B cell (primary cell): ENCODE measurements at regions of chr18 and their contacts with region 1.

Region 1: DNA sequence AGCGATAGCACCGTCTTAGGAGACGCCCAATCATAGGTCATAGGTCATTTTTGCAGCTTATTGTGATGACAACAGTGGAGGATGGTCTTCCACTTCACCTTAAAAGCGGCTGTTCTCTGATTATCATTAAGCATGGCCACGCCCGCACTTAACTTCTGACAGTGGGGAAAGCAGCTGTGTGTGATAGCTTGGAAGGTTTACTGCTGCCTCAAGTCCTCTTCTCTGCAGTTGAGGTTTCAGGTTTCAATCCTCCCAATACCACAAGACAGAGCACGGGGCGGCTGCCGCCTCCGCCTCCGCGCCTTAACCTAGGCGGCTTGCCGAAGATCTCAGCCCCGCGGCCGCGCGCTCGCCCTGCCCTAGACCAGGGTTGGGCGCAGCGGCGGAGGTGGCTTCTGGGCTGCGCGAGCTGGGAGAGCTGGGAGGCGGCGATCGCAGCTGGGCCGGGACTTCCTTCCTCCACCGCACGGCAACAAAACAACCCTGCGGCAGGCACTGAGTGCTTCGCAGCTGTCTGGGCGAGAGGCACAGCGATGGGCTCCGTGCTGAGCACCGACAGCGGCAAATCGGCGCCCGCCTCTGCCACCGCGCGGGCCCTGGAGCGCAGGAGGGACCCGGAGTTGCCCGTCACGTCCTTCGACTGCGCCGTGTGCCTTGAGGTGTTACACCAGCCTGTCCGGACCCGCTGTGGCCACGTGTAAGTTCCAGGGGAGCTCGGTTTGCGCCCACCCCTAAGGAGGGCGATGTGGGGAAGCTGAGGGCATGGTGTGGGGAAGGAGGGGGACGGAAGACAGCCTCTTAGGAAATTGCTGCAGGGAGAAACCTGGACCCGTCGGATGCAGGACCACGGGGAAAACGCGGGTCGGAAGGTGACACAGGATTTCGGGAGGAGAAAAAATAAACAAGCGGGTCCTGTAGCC is at the start of gene RNF125:
- DNase-seq: peak; percentile 89
- ATAC-seq: peak; percentile 82
- H3K4me3 ChIP-seq: peak within 1 kb of the TSS; percentile 82 to 93 (median 89)
- H3K4me3 Mint-ChIP-seq: peak within 1 kb of the TSS; percentile 100
- H3K27ac ChIP-seq: peak within 1 kb of the TSS; percentile 58 to 80
- H3K27ac Mint-ChIP-seq: peak within 1 kb of the TSS; percentile 97
- H3K4me1 ChIP-seq: peaks cover 14 to 20% of the 10 kb centered on the region in 2 donors
- H3K4me1 Mint-ChIP-seq: peaks cover 33% of the 10 kb centered on the region
- H3K27me3 ChIP-seq: no peaks in the 10 kb centered on the region
- H3K27me3 Mint-ChIP-seq: no peaks in the 10 kb centered on the region
- CTCF ChIP-seq: no peak
- total RNA-seq, gene RNF125: 5.6 and 6.4 TPM in 2 replicates

Region 2: DNA sequence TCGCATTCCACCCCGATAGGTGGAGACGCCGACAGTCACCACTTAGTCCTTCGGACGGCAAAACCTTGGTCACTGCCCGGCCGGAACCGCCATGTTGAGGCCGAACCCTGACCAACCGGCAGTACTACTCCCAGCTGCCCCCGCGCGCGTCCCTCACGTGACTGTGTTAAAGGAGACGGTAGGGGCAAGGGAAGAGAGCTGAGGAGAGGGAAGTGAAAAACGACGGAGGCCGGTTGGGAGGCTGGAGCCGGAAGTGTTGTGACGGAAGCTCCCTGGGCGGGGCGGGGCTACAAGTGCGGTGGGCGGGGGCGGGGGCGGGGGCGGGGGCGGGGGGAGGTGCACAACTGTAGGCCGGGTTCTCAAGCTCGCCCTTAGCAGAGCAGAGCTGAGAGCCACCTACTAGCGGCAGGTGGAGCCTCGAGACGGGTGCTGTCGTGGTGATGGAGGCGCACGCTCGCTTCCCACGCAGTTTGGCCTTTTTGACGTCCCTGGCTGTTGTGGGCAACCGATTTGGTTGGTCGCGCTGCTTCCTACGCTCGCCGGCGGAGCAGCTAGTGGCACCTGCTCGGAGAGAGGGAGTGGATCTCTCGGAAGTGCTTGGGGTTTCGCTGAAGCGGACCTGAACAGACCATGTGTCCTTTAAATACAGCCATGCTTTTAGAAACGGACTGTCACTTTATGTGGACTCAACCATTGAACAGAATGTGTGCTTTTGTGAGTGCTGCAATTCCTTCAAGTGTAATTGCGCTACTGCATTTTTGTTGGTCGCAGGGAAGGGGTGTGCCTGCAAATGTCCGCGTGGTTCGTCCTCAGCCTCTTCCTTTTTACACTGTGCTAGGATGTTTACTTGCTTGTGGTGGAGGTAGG is 75.4 kb before region 1 on chr18 and contains the start of gene TRAPPC8:
- CTCF ChIA-PET with region 1: interaction called, 5 read pairs
- POLR2A ChIA-PET with region 1: interaction called, 29 read pairs
- intact Hi-C with region 1: loop called (anchors 1 kb)
- DNase-seq: peak; percentile 98
- ATAC-seq: peak; percentile 80
- H3K4me3 ChIP-seq: peak within 1 kb of the TSS; percentile 83 to 97 (median 94)
- H3K4me3 Mint-ChIP-seq: peak within 1 kb of the TSS; percentile 100
- H3K27ac ChIP-seq: peak within 1 kb of the TSS; percentile 98
- H3K27ac Mint-ChIP-seq: peak within 1 kb of the TSS; percentile 100
- H3K4me1 ChIP-seq: peaks cover 24 to 31% of the 10 kb centered on the region in 2 donors
- H3K4me1 Mint-ChIP-seq: peaks cover 39% of the 10 kb centered on the region
- H3K27me3 ChIP-seq: no peaks in the 10 kb centered on the region
- H3K27me3 Mint-ChIP-seq: no peaks in the 10 kb centered on the region
- CTCF ChIP-seq: no peak
- total RNA-seq, gene TRAPPC8: 89.8 and 95.5 TPM in 2 replicates

Region 3: GRCh38 chr18:32042337-32042736 is 23.7 kb after region 1 on chr18:
- CTCF ChIA-PET with region 1: interaction called, 3 read pairs
- POLR2A ChIA-PET with region 1: interaction called, 7 read pairs
- intact Hi-C with region 1: loop called (anchors 1 kb)
- DNase-seq: peak; percentile 55
- ATAC-seq: peak; percentile 45
- H3K4me3 ChIP-seq: no peak overlapping the region
- H3K4me3 Mint-ChIP-seq: peak overlapping the region; percentile 73
- H3K27ac ChIP-seq: peak overlapping the region; percentile 46 to 68
- H3K27ac Mint-ChIP-seq: peak overlapping the region; percentile 89
- H3K4me1 ChIP-seq: peaks cover 24 to 30% of the 10 kb centered on the region in 2 donors
- H3K4me1 Mint-ChIP-seq: peaks cover 31% of the 10 kb centered on the region
- H3K27me3 ChIP-seq: no peaks in the 10 kb centered on the region
- H3K27me3 Mint-ChIP-seq: no peaks in the 10 kb centered on the region
- CTCF ChIP-seq: no peak

Region 4: DNA sequence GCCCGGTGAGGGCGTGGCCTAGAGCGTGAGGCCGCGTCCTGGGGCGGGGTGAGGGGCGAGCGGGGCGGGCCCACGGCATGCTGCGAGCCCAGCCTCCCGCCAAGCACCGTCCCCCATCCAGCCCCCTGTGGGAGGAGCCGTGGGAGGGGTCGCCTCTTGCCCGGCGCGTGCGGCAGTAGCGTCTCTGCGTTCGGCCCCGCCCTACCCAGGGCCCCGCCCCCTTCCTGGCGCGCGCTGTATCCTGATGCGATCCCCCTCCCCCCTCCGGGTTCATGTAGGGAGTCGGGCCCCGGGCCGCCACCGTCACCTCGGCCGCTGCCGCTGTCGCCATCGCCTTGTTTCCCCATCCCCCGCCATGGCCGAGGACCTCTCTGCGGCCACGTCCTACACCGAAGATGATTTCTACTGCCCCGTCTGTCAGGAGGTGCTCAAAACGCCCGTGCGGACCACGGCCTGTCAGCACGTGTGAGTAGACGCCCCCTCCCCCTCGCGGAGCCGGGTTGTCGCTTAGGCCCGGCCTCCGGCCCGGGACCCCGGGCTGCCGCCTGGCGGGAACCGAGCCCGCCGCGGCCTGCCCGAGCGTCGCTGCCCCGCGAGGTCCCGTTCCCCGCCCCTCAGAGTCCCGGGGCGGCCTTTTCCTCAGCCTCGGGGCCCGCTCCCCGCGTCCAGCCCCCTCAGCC is 74.0 kb after region 1 on chr18:
- CTCF ChIA-PET with region 1: interaction called, 9 read pairs
- POLR2A ChIA-PET with region 1: interaction called, 37 read pairs
- intact Hi-C with region 1: loop called (anchors 1 kb)
- DNase-seq: peak; percentile 98
- ATAC-seq: peak; percentile 90
- H3K4me3 ChIP-seq: peak overlapping the region; percentile 63 to 98 (median 90)
- H3K4me3 Mint-ChIP-seq: peak overlapping the region; percentile 93
- H3K27ac ChIP-seq: peak overlapping the region; percentile 100
- H3K27ac Mint-ChIP-seq: peak overlapping the region; percentile 98
- H3K4me1 ChIP-seq: peaks cover 35 to 40% of the 10 kb centered on the region in 2 donors
- H3K4me1 Mint-ChIP-seq: peaks cover 43% of the 10 kb centered on the region
- H3K27me3 ChIP-seq: no peaks in the 10 kb centered on the region
- H3K27me3 Mint-ChIP-seq: no peaks in the 10 kb centered on the region
- CTCF ChIP-seq: no peak

Region 5: DNA sequence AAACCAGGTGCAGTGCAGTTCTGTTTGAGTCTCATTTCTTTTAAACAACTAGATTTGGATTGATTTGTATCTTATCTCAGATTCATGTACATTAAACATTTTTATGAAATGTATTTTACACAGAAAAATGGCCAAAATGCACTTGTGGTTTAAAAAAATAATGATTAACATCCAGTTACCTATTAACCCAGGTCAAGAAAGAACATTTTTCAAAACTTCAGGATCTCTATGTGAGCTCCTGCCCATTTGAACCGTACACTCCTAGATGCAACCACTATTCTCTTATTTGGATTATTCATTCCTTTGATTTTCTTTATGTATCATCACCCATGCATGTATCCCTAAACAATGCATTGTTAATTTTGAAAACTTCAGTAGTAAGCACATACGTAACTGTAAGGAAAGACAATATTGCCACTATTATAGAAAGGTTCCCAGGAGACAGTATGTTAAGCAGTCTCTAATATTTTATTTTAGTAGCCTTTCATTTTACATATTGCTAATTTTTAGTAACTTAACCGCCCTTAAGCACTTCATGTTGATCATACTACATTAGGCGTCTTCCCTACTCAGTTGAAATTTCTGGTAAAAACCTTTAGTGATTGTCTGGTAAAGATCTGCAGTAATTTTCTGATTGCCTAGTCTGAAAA is 95.8 kb after region 1 on chr18:
- CTCF ChIA-PET with region 1: no interaction called
- POLR2A ChIA-PET with region 1: no interaction called
- intact Hi-C with region 1: no loop called
- DNase-seq: no peak
- ATAC-seq: no peak
- H3K4me3 ChIP-seq: no peak overlapping the region
- H3K4me3 Mint-ChIP-seq: no peak overlapping the region
- H3K27ac ChIP-seq: no peak overlapping the region
- H3K27ac Mint-ChIP-seq: no peak overlapping the region
- H3K4me1 ChIP-seq: no peaks in the 10 kb centered on the region
- H3K4me1 Mint-ChIP-seq: peaks cover 19% of the 10 kb centered on the region
- H3K27me3 ChIP-seq: no peaks in the 10 kb centered on the region
- H3K27me3 Mint-ChIP-seq: no peaks in the 10 kb centered on the region
- CTCF ChIP-seq: no peak

Region 6: DNA sequence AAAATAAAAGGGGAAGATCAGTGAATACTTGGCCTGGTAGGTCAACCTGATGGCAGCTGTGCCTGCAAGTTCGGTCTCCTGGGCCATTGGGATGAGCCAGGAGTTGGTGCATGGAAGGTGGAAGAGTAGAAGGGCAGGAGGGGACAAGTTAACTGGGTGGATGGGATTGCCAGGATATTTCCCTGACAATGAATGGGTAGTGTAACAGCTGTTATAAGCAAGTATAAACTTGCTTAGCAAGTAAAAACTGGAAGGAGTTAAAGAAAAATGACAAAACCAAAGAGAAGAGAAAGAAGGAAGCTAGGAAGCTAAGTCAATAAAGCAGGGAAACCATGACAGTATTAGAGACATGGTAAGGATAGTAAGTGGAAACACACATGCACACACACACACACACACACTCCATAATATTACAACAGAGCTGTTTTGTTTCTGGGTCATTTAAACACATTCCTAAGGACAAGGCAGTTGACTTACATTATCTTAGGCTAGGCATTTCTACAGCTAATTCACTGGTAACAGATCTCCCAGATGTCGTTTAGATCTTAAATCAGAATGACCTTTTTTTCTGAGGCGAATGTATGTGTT is 200.9 kb after region 1 on chr18:
- CTCF ChIA-PET with region 1: no interaction called
- POLR2A ChIA-PET with region 1: no interaction called
- intact Hi-C with region 1: no loop called
- DNase-seq: no peak
- ATAC-seq: no peak
- H3K4me3 ChIP-seq: no peak overlapping the region
- H3K4me3 Mint-ChIP-seq: no peak overlapping the region
- H3K27ac ChIP-seq: no peak overlapping the region
- H3K27ac Mint-ChIP-seq: no peak overlapping the region
- H3K4me1 ChIP-seq: no peaks in the 10 kb centered on the region
- H3K4me1 Mint-ChIP-seq: no peaks in the 10 kb centered on the region
- H3K27me3 ChIP-seq: no peaks in the 10 kb centered on the region
- H3K27me3 Mint-ChIP-seq: no peaks in the 10 kb centered on the region
- CTCF ChIP-seq: no peak